IMR-90 (cell line): ENCODE measurements at regions of chr14 and their contacts with region 1.

Region 1: GRCh38 chr14:89767861-89768268 is 186.7 kb downstream of the EFCAB11 start:
- DNase-seq: peak; percentile 63
- ATAC-seq: peak; percentile 54
- H3K4me3 ChIP-seq: no peak overlapping the region
- H3K27ac ChIP-seq: no peak overlapping the region
- H3K4me1 ChIP-seq: peaks cover 13% of the 10 kb centered on the region
- H3K27me3 ChIP-seq: no peaks in the 10 kb centered on the region
- CTCF ChIP-seq: peak; percentile 62
- POLR2A ChIP-seq: no peak
- RAD21 ChIP-seq: peak; percentile 88

Region 2: GRCh38 chr14:89416002-89416995 is 351.6 kb before region 1 on chr14:
- CTCF ChIA-PET with region 1: no interaction called
- POLR2A ChIA-PET with region 1: no interaction called
- dilution Hi-C with region 1: no loop called
- in situ Hi-C with region 1: no loop called
- intact Hi-C with region 1: loop called (anchors 5 kb)
- DNase-seq: peak; percentile 97
- ATAC-seq: peak; percentile 81
- H3K4me3 ChIP-seq: peak overlapping the region; percentile 62
- H3K27ac ChIP-seq: peak overlapping the region; percentile 60
- H3K4me1 ChIP-seq: peaks cover 12% of the 10 kb centered on the region
- H3K27me3 ChIP-seq: no peaks in the 10 kb centered on the region
- CTCF ChIP-seq: no peak
- POLR2A ChIP-seq: peak; percentile 69
- RAD21 ChIP-seq: no peak; the same call in 1 of the 2 replicates

Region 3: DNA sequence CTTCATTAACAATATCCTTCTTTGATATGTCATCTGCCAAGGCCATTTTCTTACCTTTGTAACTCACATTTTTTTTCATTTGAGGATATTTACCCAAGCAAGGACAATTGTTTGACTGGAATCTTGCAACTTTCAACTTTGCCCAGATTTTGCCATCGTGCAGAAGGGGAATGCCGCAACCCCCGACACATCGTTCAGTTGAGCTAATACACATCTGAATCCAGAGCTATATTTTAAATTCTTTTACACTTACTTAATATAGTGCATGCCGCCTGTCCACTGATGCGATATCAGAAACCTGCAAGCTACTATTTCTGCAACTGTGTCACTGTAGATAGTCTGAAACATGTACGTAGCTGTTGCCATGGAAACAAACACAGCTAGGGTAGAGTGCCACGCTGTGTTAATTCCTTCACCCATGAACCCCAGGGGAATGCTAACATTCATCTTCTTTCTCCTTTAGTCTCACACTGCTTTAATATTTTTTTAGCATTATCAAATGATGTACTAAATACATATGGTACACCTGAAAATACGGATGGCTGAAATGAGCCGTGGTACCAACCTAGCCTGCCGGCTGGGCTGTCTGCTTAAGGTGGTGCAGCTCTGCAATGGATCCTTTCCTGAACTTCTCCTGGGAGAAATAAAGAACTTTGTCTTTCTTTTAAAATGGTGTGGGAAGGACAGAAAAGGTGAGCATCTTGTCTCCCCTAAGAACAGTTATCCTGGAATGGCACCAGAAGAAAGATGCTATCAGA is 273.8 kb before region 1 on chr14:
- CTCF ChIA-PET with region 1: no interaction called
- POLR2A ChIA-PET with region 1: interaction called, 12 read pairs
- dilution Hi-C with region 1: no loop called
- in situ Hi-C with region 1: no loop called
- intact Hi-C with region 1: no loop called
- DNase-seq: no peak
- ATAC-seq: no peak
- H3K4me3 ChIP-seq: no peak overlapping the region
- H3K27ac ChIP-seq: no peak overlapping the region
- H3K4me1 ChIP-seq: peaks cover 13% of the 10 kb centered on the region
- H3K27me3 ChIP-seq: no peaks in the 10 kb centered on the region
- CTCF ChIP-seq: no peak
- POLR2A ChIP-seq: no peak
- RAD21 ChIP-seq: no peak

Region 4: DNA sequence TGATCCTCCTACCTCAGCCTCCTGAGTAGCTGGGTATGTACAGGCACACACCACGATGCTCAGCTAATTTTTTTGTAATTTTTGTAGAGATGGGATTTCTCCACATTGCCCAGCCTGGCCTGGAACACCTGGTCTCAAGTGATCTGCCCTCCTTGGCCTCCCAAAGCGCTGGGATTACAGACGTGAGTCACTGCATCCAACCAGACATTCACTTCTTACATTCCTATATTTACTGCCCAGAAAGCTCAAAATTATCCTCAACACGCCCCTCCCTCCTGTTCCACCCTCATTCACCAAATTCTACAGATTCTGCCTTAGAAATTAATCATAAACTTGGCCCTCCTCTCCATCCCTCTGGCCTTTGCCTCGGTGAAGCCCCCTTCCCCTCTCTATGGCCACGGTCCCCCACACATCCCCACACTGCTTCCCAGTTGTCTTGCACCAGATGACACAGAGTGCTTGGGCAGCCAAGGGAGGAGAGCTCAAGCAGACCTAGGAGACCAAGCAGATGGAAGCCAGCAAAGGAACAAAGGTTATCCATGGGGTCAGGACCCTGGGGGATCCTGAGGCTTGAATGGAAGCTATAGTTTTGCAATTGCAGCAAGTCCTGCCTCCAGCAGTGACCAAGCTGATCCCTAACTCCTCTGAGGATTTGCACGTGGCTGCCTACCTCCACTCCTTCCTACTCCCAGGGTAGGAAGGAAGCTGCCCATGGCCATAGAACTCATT is 137.6 kb before region 1 on chr14:
- CTCF ChIA-PET with region 1: no interaction called
- POLR2A ChIA-PET with region 1: no interaction called
- dilution Hi-C with region 1: no loop called
- in situ Hi-C with region 1: no loop called
- intact Hi-C with region 1: no loop called
- DNase-seq: no peak
- ATAC-seq: no peak; the same call in 1 of the 2 replicates
- H3K4me3 ChIP-seq: no peak overlapping the region
- H3K27ac ChIP-seq: peak overlapping the region; percentile 6; the same call in 1 of the 2 replicates
- H3K4me1 ChIP-seq: peaks cover 9% of the 10 kb centered on the region
- H3K27me3 ChIP-seq: no peaks in the 10 kb centered on the region; the same call in 1 of the 2 replicates
- CTCF ChIP-seq: no peak
- POLR2A ChIP-seq: no peak
- RAD21 ChIP-seq: no peak

Region 5: GRCh38 chr14:89899917-89900663 is 132.2 kb after region 1 on chr14:
- CTCF ChIA-PET with region 1: no interaction called
- POLR2A ChIA-PET with region 1: interaction called, 5 read pairs
- dilution Hi-C with region 1: no loop called
- in situ Hi-C with region 1: no loop called
- intact Hi-C with region 1: loop called (anchors 2 kb)
- DNase-seq: peak; percentile 49
- ATAC-seq: peak; percentile 49
- H3K4me3 ChIP-seq: peak overlapping the region; percentile 11; the same call in 1 of the 2 replicates
- H3K27ac ChIP-seq: peak overlapping the region; percentile 100
- H3K4me1 ChIP-seq: peaks cover 9% of the 10 kb centered on the region
- H3K27me3 ChIP-seq: no peaks in the 10 kb centered on the region
- CTCF ChIP-seq: peak; percentile 56
- POLR2A ChIP-seq: no peak
- RAD21 ChIP-seq: peak; percentile 64

Region 6: DNA sequence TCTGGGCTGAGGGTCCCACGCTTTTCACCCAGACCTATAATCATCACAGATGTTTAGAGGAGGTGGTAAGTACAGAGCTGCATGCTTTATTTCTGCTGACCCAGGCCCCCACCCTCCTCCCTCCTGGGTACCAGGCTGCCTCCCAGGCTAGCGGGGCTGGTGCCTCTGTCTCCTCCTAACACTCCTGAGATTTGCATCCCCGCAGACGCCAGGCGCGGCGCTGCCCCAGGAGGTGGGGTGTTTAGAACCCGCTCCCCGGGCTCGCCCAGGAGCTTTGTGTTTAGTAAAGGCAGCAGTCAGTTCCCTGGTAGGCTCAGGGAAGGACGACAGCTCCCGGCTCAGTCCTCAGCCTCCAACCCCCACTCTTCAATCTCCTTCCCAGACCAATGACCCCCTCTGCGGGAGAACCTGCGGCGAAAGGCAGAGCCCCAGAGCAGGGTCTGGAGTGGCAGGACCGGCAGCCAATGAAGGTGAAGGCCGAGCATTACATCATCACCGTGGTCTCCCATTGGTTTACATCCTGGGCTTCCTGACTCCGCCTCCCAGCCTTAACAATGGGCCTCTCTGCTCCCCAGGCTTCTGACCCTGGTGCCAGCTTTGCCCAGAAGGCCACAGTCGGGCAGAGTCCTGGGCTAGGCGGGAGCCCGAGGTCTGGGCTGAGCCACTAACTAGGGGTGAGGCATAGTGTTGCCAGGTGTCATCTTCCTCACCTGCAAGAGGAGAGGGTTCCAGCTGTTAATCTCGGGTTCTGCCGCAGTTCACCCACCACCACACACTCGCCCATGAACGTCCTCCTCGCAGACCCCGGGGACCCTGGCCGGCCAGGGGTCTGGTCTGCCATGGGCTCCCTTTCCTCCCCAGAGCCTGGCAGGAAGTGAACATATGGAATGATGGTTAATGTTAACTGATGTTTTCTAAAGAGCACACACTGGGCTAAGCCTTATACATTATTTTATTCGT is 686.5 kb after region 1 on chr14:
- CTCF ChIA-PET with region 1: no interaction called
- POLR2A ChIA-PET with region 1: no interaction called
- dilution Hi-C with region 1: no loop called
- in situ Hi-C with region 1: no loop called
- intact Hi-C with region 1: no loop called
- DNase-seq: peak; percentile 62
- ATAC-seq: peak; percentile 85
- H3K4me3 ChIP-seq: peak overlapping the region; percentile 9; the same call in 1 of the 2 replicates
- H3K27ac ChIP-seq: no peak overlapping the region
- H3K4me1 ChIP-seq: no peaks in the 10 kb centered on the region
- H3K27me3 ChIP-seq: peaks cover 29% of the 10 kb centered on the region
- CTCF ChIP-seq: no peak
- POLR2A ChIP-seq: no peak
- RAD21 ChIP-seq: no peak